Naive thymus-derived CD4-positive, alpha-beta T cell (primary cell): ENCODE measurements at regions of chr20 and their contacts with region 1.

Region 1: GRCh38 chr20:1437235-1437904 is 29.3 kb downstream of the NSFL1C start:
- DNase-seq: peak; percentile 55 to 79 (median 72)
- ATAC-seq: peak; percentile 72
- H3K4me3 ChIP-seq: no peak overlapping the region
- H3K4me3 Mint-ChIP-seq: peak overlapping the region in 1 of 10 donors; percentile 35
- H3K27ac ChIP-seq: no peak overlapping the region
- H3K27ac Mint-ChIP-seq: peak overlapping the region in 3 of 9 donors; percentile 8 to 73 (median 16)
- H3K4me1 ChIP-seq: peaks cover 11 to 17% of the 10 kb centered on the region in 2 donors
- H3K4me1 Mint-ChIP-seq: peaks cover 25 to 53% (median 49%) of the 10 kb centered on the region in 7 donors
- H3K27me3 ChIP-seq: no peaks in the 10 kb centered on the region
- H3K27me3 Mint-ChIP-seq: peaks cover 0 to 19% (median 0%) of the 10 kb centered on the region in 5 donors

Region 2: GRCh38 chr20:1299522-1299921 is 137.8 kb before region 1 on chr20:
- CTCF ChIA-PET with region 1: interaction called, 3 read pairs
- POLR2A ChIA-PET with region 1: no interaction called
- intact Hi-C with region 1: loop called (anchors 1 kb)
- DNase-seq: peak in 6 of 9 donors; percentile 12 to 39 (median 32)
- ATAC-seq: peak; percentile 64
- H3K4me3 ChIP-seq: no peak overlapping the region
- H3K4me3 Mint-ChIP-seq: peak overlapping the region in 7 of 10 donors; percentile 40 to 62 (median 58)
- H3K27ac ChIP-seq: peak overlapping the region; percentile 17
- H3K27ac Mint-ChIP-seq: peak overlapping the region; percentile 52 to 93 (median 75)
- H3K4me1 ChIP-seq: peaks cover 12 to 23% of the 10 kb centered on the region in 2 donors
- H3K4me1 Mint-ChIP-seq: peaks cover 20 to 36% (median 32%) of the 10 kb centered on the region in 7 donors
- H3K27me3 ChIP-seq: no peaks in the 10 kb centered on the region
- H3K27me3 Mint-ChIP-seq: no peaks in the 10 kb centered on the region

Region 3: DNA sequence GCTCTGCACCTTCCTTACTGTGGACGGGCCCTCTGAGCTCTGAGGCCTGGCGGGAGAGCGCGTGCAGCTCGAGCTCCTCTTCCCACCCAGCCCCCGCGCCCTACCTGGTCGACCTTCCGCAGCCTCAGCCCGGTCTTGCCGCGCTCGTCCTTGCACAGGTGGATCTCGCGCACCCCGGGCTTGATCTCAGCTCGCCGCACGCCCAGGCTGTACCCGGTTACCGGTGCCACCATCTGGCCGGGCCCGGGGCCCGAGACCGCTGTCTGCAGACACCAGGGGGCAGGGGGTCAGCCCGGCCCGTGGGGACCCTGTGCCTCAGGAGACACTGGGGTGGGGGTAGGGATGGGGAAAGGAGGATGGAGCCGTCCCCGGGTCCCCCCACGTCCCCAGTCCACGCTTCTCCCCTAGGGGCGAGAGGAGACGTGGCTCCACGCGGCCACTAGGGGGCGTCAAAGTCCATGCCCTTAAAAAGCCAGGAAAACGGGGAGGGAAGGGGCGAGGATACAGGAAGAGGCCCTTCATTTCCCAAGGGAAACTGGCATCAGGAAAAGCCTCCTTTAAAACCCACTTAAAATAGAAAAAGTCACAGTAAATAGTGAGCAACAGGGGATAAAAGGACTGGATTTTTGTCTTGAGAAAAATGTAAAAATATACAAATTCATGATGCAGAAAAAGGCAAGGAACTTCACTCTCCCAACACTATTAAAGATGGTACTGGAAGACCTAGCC is 124.0 kb before region 1 on chr20:
- CTCF ChIA-PET with region 1: interaction called, 17 read pairs
- POLR2A ChIA-PET with region 1: interaction called, 4 read pairs
- intact Hi-C with region 1: loop called (anchors 1 kb)
- DNase-seq: peak; percentile 41 to 69 (median 57)
- ATAC-seq: peak; percentile 85
- H3K4me3 ChIP-seq: no peak overlapping the region
- H3K4me3 Mint-ChIP-seq: peak overlapping the region in 2 of 10 donors; percentile 28 to 34
- H3K27ac ChIP-seq: no peak overlapping the region
- H3K27ac Mint-ChIP-seq: peak overlapping the region in 1 of 9 donors; percentile 48
- H3K4me1 ChIP-seq: peaks cover 5 to 7% of the 10 kb centered on the region in 2 donors
- H3K4me1 Mint-ChIP-seq: peaks cover 0 to 16% (median 4%) of the 10 kb centered on the region in 7 donors
- H3K27me3 ChIP-seq: no peaks in the 10 kb centered on the region
- H3K27me3 Mint-ChIP-seq: no peaks in the 10 kb centered on the region

Region 4: DNA sequence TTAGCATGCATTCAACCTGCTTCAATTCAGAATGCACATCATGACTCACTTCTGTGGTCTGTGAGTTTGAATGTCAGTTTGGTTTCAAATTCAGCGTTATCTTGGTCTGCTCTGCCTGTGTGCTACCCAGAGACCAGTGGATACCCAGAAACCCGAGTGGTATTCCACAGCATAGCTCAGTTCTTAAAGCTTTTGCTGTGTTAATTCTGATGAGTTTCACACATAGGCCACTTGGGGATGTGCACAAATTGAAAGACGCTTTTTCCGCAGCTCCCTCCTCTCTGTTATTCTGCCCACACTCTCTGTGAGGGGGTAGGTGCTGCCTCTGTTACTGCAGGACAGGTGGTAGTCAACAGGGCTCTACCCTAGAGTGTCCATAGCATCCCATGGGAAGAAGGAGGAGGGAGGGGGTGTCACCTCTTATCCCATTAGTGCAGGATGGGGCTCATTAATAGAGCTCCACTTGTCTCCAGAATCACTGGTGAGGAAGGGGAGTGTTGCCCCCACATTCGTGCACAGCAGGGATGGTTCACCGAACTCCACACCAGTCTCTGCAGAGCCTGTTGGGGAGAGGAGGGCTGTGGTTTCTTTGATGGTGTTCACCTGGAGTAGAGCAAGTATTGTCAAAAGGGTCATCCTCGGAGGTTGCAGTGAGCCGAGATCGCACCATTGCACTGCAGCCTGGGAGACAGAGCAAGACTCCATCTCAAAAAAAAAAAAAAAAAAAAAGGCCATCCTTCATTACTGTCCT is 79.3 kb before region 1 on chr20:
- CTCF ChIA-PET with region 1: interaction called, 3 read pairs
- POLR2A ChIA-PET with region 1: no interaction called
- intact Hi-C with region 1: loop called in 1 of 2 experiments (anchors 2 kb)
- DNase-seq: peak in 1 of 9 donors; percentile 55
- ATAC-seq: no peak
- H3K4me3 ChIP-seq: no peak overlapping the region
- H3K4me3 Mint-ChIP-seq: peak overlapping the region; percentile 36 to 78 (median 48)
- H3K27ac ChIP-seq: no peak overlapping the region
- H3K27ac Mint-ChIP-seq: peak overlapping the region in 8 of 9 donors; percentile 51 to 80 (median 70)
- H3K4me1 ChIP-seq: peaks cover 0 to 10% of the 10 kb centered on the region in 2 donors
- H3K4me1 Mint-ChIP-seq: peaks cover 24 to 67% (median 55%) of the 10 kb centered on the region in 7 donors
- H3K27me3 ChIP-seq: no peaks in the 10 kb centered on the region
- H3K27me3 Mint-ChIP-seq: no peaks in the 10 kb centered on the region